ENCODE measurements at regions of chr2 and their contacts with region 1.

Region 1: DNA sequence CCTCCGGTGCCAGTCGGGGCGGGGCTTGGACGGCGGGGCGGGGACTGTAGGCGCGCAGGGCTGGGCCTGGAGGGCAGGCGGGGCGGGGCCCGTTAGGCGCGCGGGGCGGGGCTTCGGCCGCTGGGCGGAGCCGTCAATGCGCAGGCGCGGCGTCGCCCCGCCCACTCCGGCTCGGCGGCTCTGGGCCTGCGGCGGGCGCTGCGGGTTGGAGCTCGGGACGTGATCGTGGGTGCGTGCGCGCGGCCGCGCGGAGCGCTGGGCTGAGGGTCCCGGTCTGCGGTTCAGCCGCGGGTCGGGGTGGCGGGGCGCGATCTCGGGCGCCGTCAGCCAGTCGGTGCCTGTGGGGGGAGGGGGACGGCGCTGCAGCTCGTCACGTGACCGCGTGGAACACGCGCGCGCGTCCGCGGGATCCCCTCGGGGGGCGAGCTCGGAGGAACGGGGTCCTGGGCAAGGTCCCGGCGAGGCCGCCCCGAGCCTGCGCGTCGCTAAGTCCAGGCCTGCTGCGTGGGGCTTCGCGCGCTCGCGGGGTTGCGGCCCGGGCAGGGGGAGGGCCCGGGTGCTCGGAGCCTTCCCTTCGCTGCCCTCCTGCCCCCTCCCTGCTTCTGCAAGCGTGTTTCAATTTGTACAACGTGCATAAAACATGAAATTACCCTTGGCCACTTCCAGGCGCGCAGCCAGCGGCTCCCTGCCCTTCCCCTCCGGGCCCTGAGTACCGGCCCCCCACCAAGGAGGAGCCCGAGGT is at the start of gene D2HGDH:
- DNase-seq: peak; percentile 85 to 99 (median 91)
- ATAC-seq: peak; percentile 98
- H3K4me3 ChIP-seq: peak within 1 kb of the TSS; percentile 88
- H3K4me3 Mint-ChIP-seq: peak within 1 kb of the TSS; percentile 79 to 89 (median 84)
- H3K27ac ChIP-seq: peak within 1 kb of the TSS; percentile 75
- H3K27ac Mint-ChIP-seq: peak within 1 kb of the TSS in 8 of 9 donors; percentile 40 to 79 (median 72)
- H3K4me1 ChIP-seq: peaks cover 9% of the 10 kb centered on the region in 2 donors
- H3K4me1 Mint-ChIP-seq: peaks cover 9 to 54% (median 43%) of the 10 kb centered on the region in 7 donors
- H3K27me3 ChIP-seq: no peaks in the 10 kb centered on the region
- H3K27me3 Mint-ChIP-seq: no peaks in the 10 kb centered on the region
- total RNA-seq, gene D2HGDH: 32.5 to 49.8 (median 41.1) TPM

Region 2: GRCh38 chr2:241379481-241380480 is 354.9 kb before region 1 on chr2:
- CTCF ChIA-PET with region 1: no interaction called
- POLR2A ChIA-PET with region 1: no interaction called
- intact Hi-C with region 1: no loop called
- DNase-seq: no peak
- ATAC-seq: no peak
- H3K4me3 ChIP-seq: no peak overlapping the region
- H3K4me3 Mint-ChIP-seq: no peak overlapping the region
- H3K27ac ChIP-seq: no peak overlapping the region
- H3K27ac Mint-ChIP-seq: no peak overlapping the region
- H3K4me1 ChIP-seq: no peaks in the 10 kb centered on the region
- H3K4me1 Mint-ChIP-seq: peaks cover 0 to 5% (median 0%) of the 10 kb centered on the region in 7 donors
- H3K27me3 ChIP-seq: no peaks in the 10 kb centered on the region
- H3K27me3 Mint-ChIP-seq: no peaks in the 10 kb centered on the region

Region 3: DNA sequence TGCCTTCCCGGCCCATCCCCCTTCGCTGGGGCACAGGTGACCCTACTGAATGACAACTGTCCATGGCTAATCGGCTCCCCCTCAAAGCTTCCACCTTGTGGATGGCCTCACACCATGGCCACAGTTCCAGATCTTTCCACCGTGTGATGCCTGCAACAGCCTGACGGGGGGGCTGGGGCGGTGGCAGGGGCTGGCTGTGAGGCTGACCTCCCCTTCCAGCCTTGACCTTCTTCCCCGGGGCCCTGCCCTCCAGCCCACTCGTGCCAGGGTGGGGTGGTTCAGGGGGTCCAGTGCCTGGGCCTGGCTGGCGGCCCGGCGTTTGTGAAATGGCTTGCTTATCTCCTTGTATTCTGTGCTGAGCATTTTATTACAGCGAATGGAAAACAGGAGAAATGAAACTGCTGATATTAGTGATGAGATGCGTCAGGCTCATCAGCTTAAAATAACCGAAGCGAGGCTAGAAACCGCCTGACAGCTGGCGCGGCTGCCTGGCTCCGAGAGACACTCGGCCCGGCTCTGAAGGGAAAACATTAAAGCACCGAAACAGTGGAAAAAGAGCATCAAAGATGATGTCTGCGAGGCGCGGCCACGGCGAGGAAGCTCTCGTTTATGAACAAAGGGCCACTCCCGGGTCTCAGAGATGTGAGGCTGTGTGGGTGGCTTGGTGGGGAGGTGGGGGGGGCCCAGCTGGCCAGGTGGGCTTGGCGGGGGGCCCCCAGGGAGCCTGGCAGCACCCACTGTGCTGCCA is 125.0 kb after region 1 on chr2:
- CTCF ChIA-PET with region 1: no interaction called
- POLR2A ChIA-PET with region 1: no interaction called
- intact Hi-C with region 1: loop called in 1 of 2 experiments (anchors 5 kb)
- DNase-seq: peak in 4 of 9 donors; percentile 18 to 67 (median 30)
- ATAC-seq: peak; percentile 30
- H3K4me3 ChIP-seq: peak overlapping the region; percentile 61
- H3K4me3 Mint-ChIP-seq: peak overlapping the region; percentile 84 to 91 (median 86)
- H3K27ac ChIP-seq: peak overlapping the region; percentile 11
- H3K27ac Mint-ChIP-seq: peak overlapping the region; percentile 9 to 96 (median 70)
- H3K4me1 ChIP-seq: peaks cover 23 to 62% of the 10 kb centered on the region in 2 donors
- H3K4me1 Mint-ChIP-seq: peaks cover 18 to 50% (median 36%) of the 10 kb centered on the region in 7 donors
- H3K27me3 ChIP-seq: peaks cover 0 to 3% of the 10 kb centered on the region in 2 donors
- H3K27me3 Mint-ChIP-seq: peaks cover 5 to 32% (median 19%) of the 10 kb centered on the region in 5 donors

Measured in naive thymus-derived CD4-positive, alpha-beta T cell (primary cell).